Breast epithelium (tissue), 4 donors: ENCODE measurements at regions of chr1 and their contacts with region 1.

Region 1: DNA sequence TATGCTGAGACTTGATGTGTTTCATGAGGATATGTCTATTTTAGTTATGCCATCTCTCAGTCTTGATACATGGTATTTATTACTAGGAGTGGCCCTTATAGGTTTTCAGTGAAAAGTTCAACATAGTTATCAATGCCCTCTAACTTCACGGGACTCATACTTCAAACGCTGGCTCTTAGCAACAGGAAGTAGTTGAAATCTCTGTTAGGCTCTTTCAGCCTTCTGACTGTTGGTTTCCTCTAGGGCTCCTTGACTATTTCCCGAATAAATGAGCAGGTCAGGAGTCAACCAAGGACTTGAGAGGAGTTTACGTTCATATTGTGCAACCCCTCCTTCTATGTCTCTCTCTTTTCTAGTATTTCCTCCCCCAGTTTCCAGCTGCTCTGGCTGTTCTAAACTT is 141.8 kb downstream of the RGS7 start:
- DNase-seq: no peak
- H3K4me3 ChIP-seq: no peak overlapping the region
- H3K27ac ChIP-seq: no peak overlapping the region
- H3K4me1 ChIP-seq: no peaks in the 10 kb centered on the region
- H3K27me3 ChIP-seq: no peaks in the 10 kb centered on the region
- CTCF ChIP-seq: no peak
- POLR2A ChIP-seq: no peak

Region 2: GRCh38 chr1:241235256-241235897 is 20.2 kb after region 1 on chr1:
- intact Hi-C with region 1: loop called (anchors 1 kb)
- DNase-seq: no peak
- H3K4me3 ChIP-seq: no peak overlapping the region
- H3K27ac ChIP-seq: no peak overlapping the region
- H3K4me1 ChIP-seq: no peaks in the 10 kb centered on the region
- H3K27me3 ChIP-seq: no peaks in the 10 kb centered on the region
- CTCF ChIP-seq: no peak
- POLR2A ChIP-seq: no peak

Region 3: DNA sequence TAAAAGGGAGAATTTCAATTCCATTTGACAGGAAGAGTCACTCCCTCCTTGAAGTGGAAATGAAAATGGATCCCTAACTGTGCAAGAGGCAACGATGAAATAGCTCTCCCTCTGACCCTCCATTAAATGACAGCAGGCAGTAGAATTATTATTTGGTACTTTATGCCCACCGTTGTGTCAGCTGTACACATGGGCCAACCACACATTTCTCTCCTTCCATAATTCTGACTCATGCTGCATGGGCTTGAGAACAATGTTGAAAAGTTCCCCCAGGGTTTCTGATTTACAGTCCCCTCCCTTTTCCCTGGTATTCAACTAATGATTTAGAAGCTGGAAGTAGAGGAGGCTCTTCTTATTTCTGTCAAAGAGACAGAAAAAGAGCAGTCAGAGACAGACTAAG is 38.3 kb after region 1 on chr1:
- intact Hi-C with region 1: loop called (anchors 2 kb)
- DNase-seq: no peak
- H3K4me3 ChIP-seq: no peak overlapping the region
- H3K27ac ChIP-seq: no peak overlapping the region
- H3K4me1 ChIP-seq: no peaks in the 10 kb centered on the region
- H3K27me3 ChIP-seq: no peaks in the 10 kb centered on the region
- CTCF ChIP-seq: no peak
- POLR2A ChIP-seq: no peak